Astrocyte of the cerebellum (primary cell): ENCODE measurements at regions of chr2 and their contacts with region 1.

Region 1: DNA sequence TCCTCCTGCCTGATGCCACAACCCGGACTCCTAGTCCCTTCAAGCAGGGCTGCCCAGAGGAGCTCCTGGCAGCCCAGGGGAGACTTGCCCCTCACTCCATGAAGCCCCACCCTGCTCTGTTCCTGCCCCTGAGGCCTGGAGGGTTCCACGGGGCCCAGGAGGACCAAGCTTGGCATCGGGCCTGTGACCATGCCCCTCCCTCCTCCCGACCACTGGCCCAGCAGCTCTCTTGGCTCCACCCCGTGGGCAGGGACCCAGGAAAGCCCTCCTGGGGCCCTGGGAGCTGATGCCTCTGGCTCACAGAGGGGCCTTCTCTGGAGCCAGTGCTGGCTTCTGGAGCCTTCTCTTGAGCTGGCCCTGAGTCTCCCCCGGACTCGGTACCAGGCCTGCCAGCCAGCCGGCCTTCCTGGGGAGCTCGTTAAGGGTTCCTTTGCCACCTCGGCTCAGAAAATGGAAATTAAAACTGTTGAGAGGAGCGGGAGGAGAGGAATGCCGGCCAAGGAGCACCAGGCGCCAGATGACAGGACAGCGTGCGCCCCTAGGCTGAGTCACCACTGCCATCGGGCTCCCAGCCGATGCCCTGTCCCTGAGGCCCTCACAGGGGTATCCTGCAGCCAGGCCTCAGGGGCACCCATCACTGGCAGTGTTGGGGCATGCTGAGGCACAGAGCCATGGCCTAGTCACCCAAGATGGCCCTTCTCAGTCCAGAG is 40.6 kb upstream of the SNED1 start:
- DNase-seq: no peak
- H3K4me3 ChIP-seq: no peak overlapping the region
- CTCF ChIP-seq: no peak

Region 2: GRCh38 chr2:240893363-240893844 is 64.4 kb before region 1 on chr2:
- in situ Hi-C with region 1: loop called (anchors 5 kb)
- DNase-seq: no peak
- H3K4me3 ChIP-seq: no peak overlapping the region
- CTCF ChIP-seq: no peak

Region 3: GRCh38 chr2:241410739-241411176 is 452.9 kb after region 1 on chr2:
- in situ Hi-C with region 1: no loop called
- DNase-seq: peak; percentile 11
- H3K4me3 ChIP-seq: no peak overlapping the region
- CTCF ChIP-seq: no peak

Region 4: DNA sequence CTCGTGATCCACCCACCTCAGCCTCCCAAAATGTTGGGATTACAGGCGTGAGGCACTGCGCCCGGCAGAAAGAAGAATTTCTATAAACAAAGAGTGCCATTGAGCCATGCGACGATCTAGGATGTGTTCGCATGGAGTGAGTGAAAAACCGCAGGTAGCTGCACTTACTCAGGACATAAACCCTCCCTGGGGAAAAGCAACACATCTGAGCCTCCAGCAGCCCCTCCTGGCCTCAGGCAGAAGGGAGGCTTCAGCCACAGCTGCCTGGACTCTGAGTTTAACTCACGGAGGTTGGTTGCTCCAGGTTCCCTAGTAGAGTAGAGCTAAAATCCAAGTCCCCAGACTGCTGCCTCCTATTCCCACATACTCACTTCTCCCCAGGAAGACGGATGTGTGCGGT is 561.9 kb after region 1 on chr2:
- in situ Hi-C with region 1: no loop called
- DNase-seq: no peak
- H3K4me3 ChIP-seq: no peak overlapping the region
- CTCF ChIP-seq: no peak